Calu3 (cell line): ENCODE measurements at regions of chr6 and their contacts with region 1.

Region 1: DNA sequence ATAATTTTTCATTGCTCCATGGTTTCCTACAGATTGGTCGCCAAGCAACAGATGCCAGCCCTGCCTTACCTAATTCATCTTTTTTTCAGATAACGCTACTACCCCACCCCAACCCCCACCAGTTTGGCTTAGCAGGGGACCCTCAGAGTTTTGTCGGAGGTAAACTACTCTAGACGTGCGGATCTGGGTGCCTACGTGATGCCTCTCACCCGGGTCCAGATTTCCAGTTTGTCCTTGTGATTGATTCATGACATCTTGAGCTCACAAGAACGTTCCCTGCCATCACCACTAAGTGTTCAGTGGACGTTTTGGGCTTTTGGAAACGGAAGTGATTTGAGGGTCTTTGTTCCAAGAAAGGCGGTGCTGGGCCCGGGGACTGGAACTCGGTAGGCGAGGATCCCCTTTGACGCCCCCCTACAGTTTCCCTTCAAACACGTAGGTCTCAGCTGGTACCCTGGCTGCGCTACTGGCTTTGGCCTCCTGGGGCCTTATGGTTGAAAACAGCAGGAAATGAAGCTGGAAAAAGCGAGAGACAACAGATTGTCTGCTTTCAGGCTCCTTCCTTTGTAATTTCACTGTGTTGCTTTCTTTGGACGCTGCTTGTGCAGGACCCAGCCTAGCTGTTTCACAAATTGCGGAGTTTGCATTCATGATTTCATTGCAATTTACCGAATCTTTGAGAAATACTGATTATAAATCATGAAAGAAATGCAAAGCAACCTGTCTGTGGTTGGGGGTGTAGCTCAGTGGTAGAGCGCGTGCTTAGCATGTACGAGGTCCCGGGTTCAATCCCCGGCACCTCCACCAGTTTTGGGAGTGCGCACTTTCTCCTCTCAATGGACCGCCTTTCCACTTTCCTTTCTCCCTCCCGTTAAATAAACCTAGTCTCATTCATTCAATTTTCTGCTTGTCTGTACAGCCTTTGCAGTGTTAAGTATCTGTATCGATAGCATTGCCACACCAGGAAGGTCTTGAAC is 81.0 kb downstream of the GPX5 start:
- DNase-seq: peak; percentile 82
- H3K4me3 Mint-ChIP-seq: peak overlapping the region; percentile 69
- H3K27ac Mint-ChIP-seq: peak overlapping the region; percentile 83
- H3K4me1 Mint-ChIP-seq: no peaks in the 10 kb centered on the region
- H3K27me3 Mint-ChIP-seq: peaks cover 25% of the 10 kb centered on the region
- CTCF ChIP-seq: peak; percentile 59

Region 2: GRCh38 chr6:28807682-28808280 is 201.1 kb after region 1 on chr6:
- CTCF ChIA-PET with region 1: no interaction called
- intact Hi-C with region 1: loop called (anchors 10 kb)
- DNase-seq: peak; percentile 62
- H3K4me3 Mint-ChIP-seq: no peak overlapping the region
- H3K27ac Mint-ChIP-seq: peak overlapping the region; percentile 91
- H3K4me1 Mint-ChIP-seq: peaks cover 33% of the 10 kb centered on the region
- H3K27me3 Mint-ChIP-seq: peaks cover 35% of the 10 kb centered on the region
- CTCF ChIP-seq: no peak